Mammary epithelial cell (primary cell): ENCODE measurements at regions of chr1 and their contacts with region 1.

Region 1: GRCh38 chr1:92461364-92462097 is 25.2 kb downstream of the GFI1 start:
- DNase-seq: no peak
- H3K4me3 ChIP-seq: no peak overlapping the region
- H3K27ac ChIP-seq: no peak overlapping the region
- H3K4me1 ChIP-seq: no peaks in the 10 kb centered on the region
- H3K27me3 ChIP-seq: no peaks in the 10 kb centered on the region
- CTCF ChIP-seq: no peak

Region 2: GRCh38 chr1:92599184-92599583 is 137.7 kb after region 1 on chr1:
- CTCF ChIA-PET with region 1: no interaction called
- dilution Hi-C with region 1: no loop called
- in situ Hi-C with region 1: no loop called
- intact Hi-C with region 1: loop called (anchors 5 kb)
- DNase-seq: no peak
- H3K4me3 ChIP-seq: no peak overlapping the region
- H3K27ac ChIP-seq: no peak overlapping the region
- H3K4me1 ChIP-seq: no peaks in the 10 kb centered on the region
- H3K27me3 ChIP-seq: no peaks in the 10 kb centered on the region
- CTCF ChIP-seq: peak; percentile 18 to 45